ENCODE measurements at regions of chr3 and their contacts with region 1.

Region 1: GRCh38 chr3:185937689-185938463 is at the start of gene TRA2B:
- DNase-seq: peak; percentile 78 to 97
- ATAC-seq: peak; percentile 94
- H3K4me3 ChIP-seq: peak within 1 kb of the TSS; percentile 99
- H3K27ac ChIP-seq: peak within 1 kb of the TSS; percentile 97 to 100
- H3K4me1 ChIP-seq: peaks cover 15% of the 10 kb centered on the region
- CTCF ChIP-seq: no peak; the same call in 2 of the 3 replicates
- EP300 ChIP-seq: no peak
- POLR2A ChIP-seq: peak; percentile 97
- RAD21 ChIP-seq: no peak
- polyA plus RNA-seq, gene TRA2B: 186 and 273 TPM in 2 replicates

Region 2: DNA sequence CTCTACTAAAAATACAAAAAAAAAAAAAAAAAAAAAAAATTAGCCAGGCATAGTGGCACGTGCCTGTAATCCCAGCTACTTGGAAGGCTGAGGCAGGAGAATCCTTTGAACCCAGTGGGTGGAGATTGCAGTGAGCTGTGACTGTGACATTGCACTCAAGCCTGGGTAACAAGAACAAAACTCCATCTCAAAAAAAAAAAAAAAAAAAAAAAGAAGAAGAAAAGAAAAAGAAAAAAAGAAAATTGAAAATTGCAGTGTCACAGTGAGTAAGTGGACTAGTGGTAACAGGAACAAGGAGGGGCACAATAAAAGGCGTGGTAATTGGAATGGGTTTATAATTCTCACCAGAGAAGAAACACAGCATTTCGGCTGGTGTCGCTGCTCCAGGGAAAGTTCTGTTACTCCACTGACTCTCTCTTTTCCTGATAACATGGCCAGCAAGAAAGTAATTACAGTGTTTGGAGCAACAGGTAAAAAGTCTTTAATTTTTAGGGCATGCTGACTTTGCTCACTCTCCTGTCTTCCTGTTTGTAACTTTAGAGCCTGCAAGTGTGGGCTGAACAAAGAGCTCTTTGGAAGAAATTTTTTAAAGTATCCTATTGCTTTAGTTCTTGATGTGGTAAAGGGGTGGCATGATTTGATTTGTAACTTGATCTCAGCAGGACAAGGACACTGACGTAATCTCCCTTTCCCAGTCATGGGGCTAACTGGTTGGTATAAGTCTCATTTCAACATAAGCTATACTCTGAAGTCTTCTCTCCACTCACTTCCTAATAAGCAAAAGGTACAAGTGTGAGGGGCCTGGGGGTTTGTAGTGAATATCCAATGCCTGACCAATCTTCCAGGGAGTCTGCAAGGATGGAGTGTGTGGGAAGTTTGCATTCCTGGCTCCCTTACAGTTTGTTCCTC is 22.0 kb after region 1 on chr3:
- CTCF ChIA-PET with region 1: interaction called, 158 read pairs
- POLR2A ChIA-PET with region 1: interaction called, 18 read pairs
- DNase-seq: peak; percentile 48 to 82
- ATAC-seq: peak; percentile 59 to 67
- H3K4me3 ChIP-seq: peak overlapping the region; percentile 58
- H3K27ac ChIP-seq: peak overlapping the region; percentile 81 to 88
- H3K4me1 ChIP-seq: peaks cover 21% of the 10 kb centered on the region
- CTCF ChIP-seq: no peak
- EP300 ChIP-seq: no peak
- POLR2A ChIP-seq: peak; percentile 42
- RAD21 ChIP-seq: no peak

Region 3: GRCh38 chr3:186413615-186414415 is 475.9 kb after region 1 on chr3:
- CTCF ChIA-PET with region 1: no interaction called
- POLR2A ChIA-PET with region 1: no interaction called
- DNase-seq: peak in 1 of 2 experiments; percentile 4
- ATAC-seq: peak in 1 of 2 experiments; percentile 40; a peak in 3 of 6 replicates
- H3K4me3 ChIP-seq: peak overlapping the region; percentile 23
- H3K27ac ChIP-seq: peak overlapping the region; percentile 27 to 53; a peak in 2 of 6 replicates
- H3K4me1 ChIP-seq: peaks cover 38% of the 10 kb centered on the region
- CTCF ChIP-seq: no peak
- EP300 ChIP-seq: no peak
- POLR2A ChIP-seq: no peak
- RAD21 ChIP-seq: no peak